BJ (cell line): ENCODE measurements at regions of chr5 and their contacts with region 1.

Region 1: GRCh38 chr5:68732251-68732650 is 361.6 kb upstream of the SLC30A5 start:
- DNase-seq: no peak
- H3K4me3 ChIP-seq: no peak overlapping the region
- H3K27me3 ChIP-seq: no peaks in the 10 kb centered on the region
- CTCF ChIP-seq: no peak

Region 2: DNA sequence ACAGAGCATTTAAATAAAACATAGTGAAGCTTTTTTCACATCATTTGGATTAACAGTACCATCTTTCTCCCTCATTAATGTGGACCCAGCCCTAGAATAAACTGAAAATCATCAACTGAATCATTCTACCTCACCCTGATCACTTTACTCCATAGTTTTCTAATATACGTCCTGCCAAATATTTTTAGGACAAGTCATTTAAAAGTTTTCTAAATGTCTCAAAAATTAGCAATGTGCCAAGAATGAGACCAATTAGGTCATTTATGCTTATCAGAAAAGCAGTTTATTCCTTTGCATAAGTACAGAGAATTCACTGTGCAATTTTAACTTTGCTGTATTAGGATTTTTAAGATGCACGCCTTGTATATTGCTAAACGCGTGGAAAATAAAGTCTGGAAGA is 232.3 kb before region 1 on chr5:
- CTCF ChIA-PET with region 1: no interaction called
- POLR2A ChIA-PET with region 1: interaction called, 18 read pairs
- DNase-seq: no peak
- H3K4me3 ChIP-seq: no peak overlapping the region
- H3K27me3 ChIP-seq: no peaks in the 10 kb centered on the region
- CTCF ChIP-seq: no peak